B cell (primary cell): ENCODE measurements at regions of chr19 and their contacts with region 1.

Region 1: DNA sequence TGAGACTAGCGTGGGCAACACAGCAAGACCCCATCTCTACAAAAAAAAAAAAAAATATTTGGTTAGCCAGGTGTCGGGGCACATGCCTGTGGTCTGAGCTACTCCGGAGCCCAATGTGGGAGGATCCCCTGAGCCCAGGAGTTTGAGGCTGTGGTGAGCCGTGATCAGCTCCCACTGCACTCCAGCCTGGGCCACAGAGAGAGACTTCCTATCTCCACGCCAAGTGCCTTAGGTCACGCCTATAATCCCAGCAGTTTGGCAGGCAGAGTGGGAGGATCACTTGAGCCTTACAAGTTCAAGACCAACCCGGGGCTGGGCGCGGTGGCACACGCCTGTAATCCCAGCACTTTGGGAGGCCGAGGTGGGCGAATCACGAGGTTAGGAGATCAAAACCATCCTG is 8.7 kb upstream of the ADAT3 start:
- DNase-seq: no peak
- ATAC-seq: no peak
- H3K4me3 ChIP-seq: peak overlapping the region in 1 of 5 experiments; percentile 63
- H3K4me3 Mint-ChIP-seq: peak overlapping the region; percentile 54
- H3K27ac ChIP-seq: peak overlapping the region; percentile 80 to 84
- H3K27ac Mint-ChIP-seq: peak overlapping the region; percentile 81
- H3K4me1 ChIP-seq: peaks cover 44 to 56% of the 10 kb centered on the region in 2 donors
- H3K4me1 Mint-ChIP-seq: peaks cover 37% of the 10 kb centered on the region
- H3K27me3 ChIP-seq: no peaks in the 10 kb centered on the region
- H3K27me3 Mint-ChIP-seq: no peaks in the 10 kb centered on the region
- CTCF ChIP-seq: no peak

Region 2: GRCh38 chr19:1875646-1876495 is 20.6 kb before region 1 on chr19:
- CTCF ChIA-PET with region 1: interaction called, 7 read pairs
- POLR2A ChIA-PET with region 1: interaction called, 21 read pairs
- intact Hi-C with region 1: no loop called
- DNase-seq: peak; percentile 93
- ATAC-seq: peak; percentile 94
- H3K4me3 ChIP-seq: peak overlapping the region; percentile 81 to 97 (median 92)
- H3K4me3 Mint-ChIP-seq: peak overlapping the region; percentile 99
- H3K27ac ChIP-seq: peak overlapping the region; percentile 66 to 96
- H3K27ac Mint-ChIP-seq: peak overlapping the region; percentile 94
- H3K4me1 ChIP-seq: peaks cover 20 to 36% of the 10 kb centered on the region in 2 donors
- H3K4me1 Mint-ChIP-seq: peaks cover 28% of the 10 kb centered on the region
- H3K27me3 ChIP-seq: no peaks in the 10 kb centered on the region
- H3K27me3 Mint-ChIP-seq: no peaks in the 10 kb centered on the region
- CTCF ChIP-seq: no peak

Region 3: GRCh38 chr19:1884719-1885334 is 11.7 kb before region 1 on chr19:
- CTCF ChIA-PET with region 1: interaction called, 3 read pairs
- POLR2A ChIA-PET with region 1: interaction called, 20 read pairs
- intact Hi-C with region 1: loop called (anchors 1 kb)
- DNase-seq: no peak
- ATAC-seq: no peak
- H3K4me3 ChIP-seq: peak overlapping the region; percentile 63 to 92 (median 86)
- H3K4me3 Mint-ChIP-seq: peak overlapping the region; percentile 99
- H3K27ac ChIP-seq: peak overlapping the region; percentile 59 to 62
- H3K27ac Mint-ChIP-seq: peak overlapping the region; percentile 96
- H3K4me1 ChIP-seq: peaks cover 32 to 51% of the 10 kb centered on the region in 2 donors
- H3K4me1 Mint-ChIP-seq: peaks cover 36% of the 10 kb centered on the region
- H3K27me3 ChIP-seq: no peaks in the 10 kb centered on the region
- H3K27me3 Mint-ChIP-seq: no peaks in the 10 kb centered on the region
- CTCF ChIP-seq: no peak